Naive thymus-derived CD4-positive, alpha-beta T cell (primary cell): ENCODE measurements at regions of chr17 and their contacts with region 1.

Region 1: DNA sequence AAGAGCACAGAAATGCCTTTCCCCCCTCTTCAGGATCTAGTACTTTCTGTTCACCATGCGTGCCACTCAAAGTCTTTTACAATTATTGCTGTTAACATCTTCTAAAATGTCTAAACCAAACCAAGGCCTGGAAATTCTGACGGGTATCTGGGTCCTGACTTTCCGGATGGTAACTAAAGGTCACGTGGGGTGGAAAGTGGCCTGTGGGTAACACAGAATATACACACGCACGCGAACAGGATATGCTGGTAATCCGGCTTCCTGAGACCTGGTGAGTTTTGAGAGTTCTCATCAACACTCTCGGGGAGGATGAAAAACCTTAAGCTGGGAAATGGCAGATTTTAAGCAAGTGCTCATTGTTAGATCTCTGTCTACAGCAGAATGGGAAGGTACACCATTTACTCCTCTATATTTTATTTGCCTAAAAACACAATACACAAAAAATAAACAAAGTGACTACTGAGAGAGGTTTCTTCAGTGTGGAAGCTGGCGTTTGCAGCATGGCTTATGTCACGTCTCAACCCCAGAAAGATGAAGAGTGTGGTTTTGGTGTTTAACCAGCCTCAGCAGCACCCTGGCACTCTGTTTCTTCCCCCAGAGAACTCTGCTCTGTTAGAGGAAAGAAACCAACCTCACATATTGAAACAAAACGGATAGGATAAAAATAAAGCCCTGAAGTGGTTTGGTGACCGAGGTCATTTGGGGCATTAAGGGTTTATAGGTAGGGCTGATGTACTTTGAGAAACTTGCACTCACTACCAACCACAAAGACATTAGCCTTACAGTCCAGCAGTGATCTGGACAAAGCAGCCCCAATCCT is 37.3 kb downstream of the SMG6 start:
- DNase-seq: peak; percentile 20 to 96 (median 91)
- ATAC-seq: peak; percentile 92
- H3K4me3 ChIP-seq: peak overlapping the region; percentile 38
- H3K4me3 Mint-ChIP-seq: peak overlapping the region; percentile 69 to 94 (median 82)
- H3K27ac ChIP-seq: peak overlapping the region; percentile 80
- H3K27ac Mint-ChIP-seq: peak overlapping the region; percentile 96 to 100 (median 99)
- H3K4me1 ChIP-seq: peaks cover 65 to 90% of the 10 kb centered on the region in 2 donors
- H3K4me1 Mint-ChIP-seq: peaks cover 38 to 89% (median 83%) of the 10 kb centered on the region in 7 donors
- H3K27me3 ChIP-seq: no peaks in the 10 kb centered on the region
- H3K27me3 Mint-ChIP-seq: no peaks in the 10 kb centered on the region

Region 2: DNA sequence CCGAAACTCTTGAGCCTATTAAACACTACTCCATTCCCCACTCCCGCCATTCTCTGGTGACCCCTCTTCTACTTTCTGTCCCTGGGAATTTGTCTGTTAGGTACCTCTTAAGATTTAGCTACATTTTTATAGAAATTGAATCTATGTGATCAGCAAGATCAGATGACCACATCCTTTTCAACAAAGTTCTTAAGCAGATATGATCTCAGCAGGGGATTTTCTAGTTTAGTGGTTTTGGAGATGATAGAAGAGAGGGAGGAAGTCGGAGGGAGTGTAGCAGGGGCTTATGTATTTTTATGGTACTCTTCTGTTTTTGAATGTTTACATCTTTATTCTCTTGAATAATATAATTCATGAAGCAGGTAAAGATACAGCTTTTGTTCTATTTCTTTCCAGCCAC is 395.7 kb before region 1 on chr17:
- CTCF ChIA-PET with region 1: no interaction called
- POLR2A ChIA-PET with region 1: no interaction called
- intact Hi-C with region 1: loop called (anchors 1 to 5 kb)
- DNase-seq: peak in 7 of 9 donors; percentile 60 to 86 (median 79)
- ATAC-seq: peak; percentile 81
- H3K4me3 ChIP-seq: no peak overlapping the region
- H3K4me3 Mint-ChIP-seq: peak overlapping the region; percentile 16 to 93 (median 82)
- H3K27ac ChIP-seq: peak overlapping the region; percentile 88
- H3K27ac Mint-ChIP-seq: peak overlapping the region; percentile 90 to 99 (median 96)
- H3K4me1 ChIP-seq: peaks cover 34 to 40% of the 10 kb centered on the region in 2 donors
- H3K4me1 Mint-ChIP-seq: peaks cover 43 to 79% (median 71%) of the 10 kb centered on the region in 7 donors
- H3K27me3 ChIP-seq: no peaks in the 10 kb centered on the region
- H3K27me3 Mint-ChIP-seq: no peaks in the 10 kb centered on the region

Region 3: GRCh38 chr17:2215616-2216364 is 50.5 kb before region 1 on chr17:
- CTCF ChIA-PET with region 1: interaction called, 4 read pairs
- POLR2A ChIA-PET with region 1: interaction called, 6 read pairs
- intact Hi-C with region 1: loop called in 1 of 2 experiments (anchors 1 kb)
- DNase-seq: peak; percentile 43 to 81 (median 77)
- ATAC-seq: peak; percentile 98
- H3K4me3 ChIP-seq: peak overlapping the region; percentile 40
- H3K4me3 Mint-ChIP-seq: peak overlapping the region; percentile 74 to 89 (median 80)
- H3K27ac ChIP-seq: peak overlapping the region; percentile 89
- H3K27ac Mint-ChIP-seq: peak overlapping the region; percentile 94 to 98 (median 97)
- H3K4me1 ChIP-seq: peaks cover 34 to 53% of the 10 kb centered on the region in 2 donors
- H3K4me1 Mint-ChIP-seq: peaks cover 27 to 70% (median 64%) of the 10 kb centered on the region in 7 donors
- H3K27me3 ChIP-seq: no peaks in the 10 kb centered on the region
- H3K27me3 Mint-ChIP-seq: no peaks in the 10 kb centered on the region

Region 4: GRCh38 chr17:2253768-2254406 is 12.4 kb before region 1 on chr17:
- CTCF ChIA-PET with region 1: interaction called, 8 read pairs
- POLR2A ChIA-PET with region 1: interaction called, 148 read pairs
- intact Hi-C with region 1: loop called (anchors 1 kb)
- DNase-seq: peak in 6 of 9 donors; percentile 14 to 45 (median 30)
- ATAC-seq: peak; percentile 63
- H3K4me3 ChIP-seq: no peak overlapping the region
- H3K4me3 Mint-ChIP-seq: peak overlapping the region; percentile 27 to 76 (median 58)
- H3K27ac ChIP-seq: no peak overlapping the region
- H3K27ac Mint-ChIP-seq: peak overlapping the region; percentile 81 to 97 (median 93)
- H3K4me1 ChIP-seq: peaks cover 15 to 50% of the 10 kb centered on the region in 2 donors
- H3K4me1 Mint-ChIP-seq: peaks cover 29 to 79% (median 73%) of the 10 kb centered on the region in 7 donors
- H3K27me3 ChIP-seq: no peaks in the 10 kb centered on the region
- H3K27me3 Mint-ChIP-seq: no peaks in the 10 kb centered on the region

Region 5: DNA sequence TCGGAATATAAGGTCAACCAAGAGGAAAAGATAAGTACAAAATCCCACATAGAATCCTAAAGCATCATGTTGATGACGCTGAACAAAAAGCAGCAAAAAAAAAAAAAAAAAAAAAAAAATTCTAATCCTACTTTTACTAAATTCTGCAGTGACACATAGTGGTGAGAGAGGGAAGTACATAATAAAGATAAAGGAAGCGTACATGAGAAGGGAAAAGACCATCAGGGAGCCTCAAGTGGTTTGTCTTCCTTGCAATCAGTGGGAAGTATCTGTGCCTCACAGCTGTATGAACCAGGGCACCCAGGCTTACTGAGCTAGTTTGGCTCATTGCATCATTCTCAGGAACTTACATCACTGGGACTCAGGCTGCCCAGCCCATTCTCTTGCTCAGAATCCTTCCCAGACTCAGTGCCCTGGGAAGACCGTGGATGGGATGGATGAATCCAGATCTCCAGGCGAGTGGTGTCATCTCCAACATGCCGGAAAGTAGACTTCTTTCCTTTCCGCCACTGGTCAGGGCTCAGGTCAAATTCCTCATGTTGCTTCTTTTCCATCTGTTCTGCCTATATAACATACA is 16.1 kb after region 1 on chr17:
- CTCF ChIA-PET with region 1: interaction called, 40 read pairs
- POLR2A ChIA-PET with region 1: interaction called, 30 read pairs
- intact Hi-C with region 1: loop called in 1 of 2 experiments (anchors 1 kb)
- DNase-seq: peak in 7 of 9 donors; percentile 37 to 68 (median 58)
- ATAC-seq: peak; percentile 76
- H3K4me3 ChIP-seq: no peak overlapping the region
- H3K4me3 Mint-ChIP-seq: peak overlapping the region in 3 of 10 donors; percentile 12 to 64 (median 28)
- H3K27ac ChIP-seq: no peak overlapping the region
- H3K27ac Mint-ChIP-seq: peak overlapping the region; percentile 44 to 89 (median 72)
- H3K4me1 ChIP-seq: peaks cover 0 to 24% of the 10 kb centered on the region in 2 donors
- H3K4me1 Mint-ChIP-seq: peaks cover 21 to 58% (median 35%) of the 10 kb centered on the region in 7 donors
- H3K27me3 ChIP-seq: no peaks in the 10 kb centered on the region
- H3K27me3 Mint-ChIP-seq: no peaks in the 10 kb centered on the region

Region 6: DNA sequence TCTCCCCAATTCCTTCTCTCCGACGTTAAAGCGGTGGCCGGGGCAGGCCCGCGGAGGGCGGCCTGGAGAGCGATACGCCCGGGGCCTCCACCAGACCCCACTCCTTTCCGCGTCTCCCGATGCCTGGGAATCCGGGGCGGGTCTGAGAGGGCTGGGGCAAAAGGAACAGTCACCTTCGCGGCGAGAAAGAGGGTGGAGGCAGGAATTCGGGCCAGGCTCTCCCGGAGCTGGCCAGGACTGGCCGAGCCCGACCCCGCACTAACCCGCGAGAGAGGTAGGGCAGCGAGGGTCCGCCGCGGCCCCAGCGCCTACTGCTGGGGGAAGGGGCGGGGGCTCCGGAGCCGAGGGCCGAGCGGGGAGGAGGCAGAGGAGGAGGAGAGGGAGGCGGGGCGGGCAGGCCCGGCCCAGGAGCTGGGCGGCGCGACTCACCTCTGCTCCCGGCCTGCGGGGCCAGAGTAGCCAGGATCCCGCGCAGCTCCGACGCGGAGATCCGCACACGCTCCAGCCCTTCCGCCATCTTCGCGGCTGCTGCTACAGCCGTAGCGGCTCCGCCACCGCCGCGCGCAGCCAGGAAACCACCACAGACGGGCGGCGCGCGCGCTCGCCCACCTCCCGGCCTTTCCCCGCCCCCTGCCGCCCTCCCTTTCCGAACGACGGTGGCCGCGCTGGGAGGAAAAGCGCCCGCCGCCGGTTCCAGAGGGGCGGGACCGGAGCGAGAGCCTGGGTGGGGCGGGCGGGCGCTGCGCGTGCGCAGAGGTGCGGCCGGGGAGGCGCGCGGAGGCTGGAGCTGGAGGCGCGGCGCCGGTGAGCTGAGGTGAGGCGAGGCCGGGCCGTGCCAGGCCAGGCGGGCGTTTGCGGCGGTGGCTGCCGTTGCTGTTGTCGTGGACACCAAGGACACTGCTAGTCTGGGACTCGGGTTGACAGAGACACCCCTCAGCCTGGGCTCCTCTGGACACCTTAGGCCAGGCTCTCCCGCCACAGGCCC is 37.2 kb after region 1 on chr17 and contains the starts of genes SMG6 and SRR:
- CTCF ChIA-PET with region 1: interaction called, 3 read pairs
- POLR2A ChIA-PET with region 1: interaction called, 8 read pairs
- intact Hi-C with region 1: loop called in 1 of 2 experiments (anchors 1 kb)
- DNase-seq: peak; percentile 87 to 95 (median 93)
- ATAC-seq: peak; percentile 97
- H3K4me3 ChIP-seq: peak within 1 kb of the TSS; percentile 87
- H3K4me3 Mint-ChIP-seq: peak within 1 kb of the TSS; percentile 90 to 98 (median 92)
- H3K27ac ChIP-seq: peak within 1 kb of the TSS; percentile 98
- H3K27ac Mint-ChIP-seq: peak within 1 kb of the TSS; percentile 76 to 95 (median 84)
- H3K4me1 ChIP-seq: peaks cover 9 to 13% of the 10 kb centered on the region in 2 donors
- H3K4me1 Mint-ChIP-seq: peaks cover 25 to 61% (median 47%) of the 10 kb centered on the region in 7 donors
- H3K27me3 ChIP-seq: no peaks in the 10 kb centered on the region
- H3K27me3 Mint-ChIP-seq: no peaks in the 10 kb centered on the region
- total RNA-seq, gene SMG6: 45.6 to 65.3 (median 55.8) TPM
- total RNA-seq, gene SRR: 3.1 to 16.0 (median 8.3) TPM

Region 7: GRCh38 chr17:2392252-2393173 is 126.3 kb after region 1 on chr17:
- CTCF ChIA-PET with region 1: no interaction called
- POLR2A ChIA-PET with region 1: no interaction called
- intact Hi-C with region 1: loop called in 1 of 2 experiments (anchors 1 kb)
- DNase-seq: peak; percentile 94 to 100 (median 98)
- ATAC-seq: peak; percentile 78
- H3K4me3 ChIP-seq: peak overlapping the region; percentile 89
- H3K4me3 Mint-ChIP-seq: peak overlapping the region; percentile 88 to 97 (median 94)
- H3K27ac ChIP-seq: peak overlapping the region; percentile 100
- H3K27ac Mint-ChIP-seq: peak overlapping the region; percentile 90 to 98 (median 96)
- H3K4me1 ChIP-seq: peaks cover 15 to 52% of the 10 kb centered on the region in 2 donors
- H3K4me1 Mint-ChIP-seq: peaks cover 38 to 70% (median 56%) of the 10 kb centered on the region in 7 donors
- H3K27me3 ChIP-seq: no peaks in the 10 kb centered on the region
- H3K27me3 Mint-ChIP-seq: no peaks in the 10 kb centered on the region